CD8-positive, alpha-beta T cell (primary cell): ENCODE measurements at regions of chr13 and their contacts with region 1.

Region 1: DNA sequence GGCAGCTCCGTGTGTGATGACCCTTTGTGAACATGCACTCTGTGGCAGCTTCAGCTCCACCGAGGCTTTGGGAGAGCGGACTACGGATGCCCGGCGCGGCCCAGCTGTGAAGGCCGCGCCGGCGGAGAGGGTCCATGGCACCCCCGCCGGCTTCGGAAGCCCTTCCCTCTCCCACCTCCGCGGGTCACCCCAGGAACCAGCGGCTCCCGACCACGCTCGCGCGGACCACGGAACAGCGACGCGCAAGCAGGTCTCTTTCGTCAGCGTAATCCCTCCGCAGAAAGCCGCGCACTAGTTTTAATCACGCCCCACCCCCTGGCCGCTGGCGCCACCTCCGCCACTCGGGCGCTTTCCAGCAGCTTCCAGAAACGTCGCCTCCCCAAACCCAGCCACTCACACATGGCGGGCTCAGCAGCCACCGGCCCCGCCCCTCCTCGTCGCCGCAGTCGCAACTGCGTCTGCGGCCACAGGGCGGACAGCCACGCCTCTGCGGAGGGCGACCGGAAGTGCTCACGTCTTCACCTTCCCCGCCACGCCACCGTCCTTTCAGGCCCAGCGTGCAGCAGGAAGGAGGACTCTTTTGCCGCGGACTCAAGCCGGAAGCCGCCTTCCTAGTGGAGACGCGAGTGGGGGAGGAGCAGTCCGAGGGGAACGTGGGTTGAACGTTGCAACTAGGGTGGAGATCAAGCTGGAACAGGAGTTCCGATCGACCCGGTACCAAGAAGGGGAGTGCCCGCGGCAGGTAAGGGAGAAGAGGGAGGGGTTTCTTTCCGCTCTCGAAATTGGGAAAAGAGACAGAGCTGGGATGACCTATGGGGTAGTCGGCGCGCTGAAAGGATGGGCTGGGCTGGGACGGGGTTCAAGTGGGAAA is at the start of gene USPL1:
- DNase-seq: peak; percentile 97 to 100 (median 99)
- ATAC-seq: peak; percentile 89
- H3K4me3 ChIP-seq: peak within 1 kb of the TSS; percentile 78 to 96
- H3K4me3 Mint-ChIP-seq: no peak within 1 kb of the TSS
- H3K27ac ChIP-seq: peak within 1 kb of the TSS; percentile 94 to 95
- H3K27ac Mint-ChIP-seq: no peak within 1 kb of the TSS
- H3K4me1 ChIP-seq: peaks cover 34% of the 10 kb centered on the region
- H3K4me1 Mint-ChIP-seq: peaks cover 39% of the 10 kb centered on the region
- H3K27me3 ChIP-seq: no peaks in the 10 kb centered on the region
- H3K27me3 Mint-ChIP-seq: no peaks in the 10 kb centered on the region
- CTCF ChIP-seq: no peak
- total RNA-seq, gene USPL1: 42.0 to 42.4 TPM

Region 2: DNA sequence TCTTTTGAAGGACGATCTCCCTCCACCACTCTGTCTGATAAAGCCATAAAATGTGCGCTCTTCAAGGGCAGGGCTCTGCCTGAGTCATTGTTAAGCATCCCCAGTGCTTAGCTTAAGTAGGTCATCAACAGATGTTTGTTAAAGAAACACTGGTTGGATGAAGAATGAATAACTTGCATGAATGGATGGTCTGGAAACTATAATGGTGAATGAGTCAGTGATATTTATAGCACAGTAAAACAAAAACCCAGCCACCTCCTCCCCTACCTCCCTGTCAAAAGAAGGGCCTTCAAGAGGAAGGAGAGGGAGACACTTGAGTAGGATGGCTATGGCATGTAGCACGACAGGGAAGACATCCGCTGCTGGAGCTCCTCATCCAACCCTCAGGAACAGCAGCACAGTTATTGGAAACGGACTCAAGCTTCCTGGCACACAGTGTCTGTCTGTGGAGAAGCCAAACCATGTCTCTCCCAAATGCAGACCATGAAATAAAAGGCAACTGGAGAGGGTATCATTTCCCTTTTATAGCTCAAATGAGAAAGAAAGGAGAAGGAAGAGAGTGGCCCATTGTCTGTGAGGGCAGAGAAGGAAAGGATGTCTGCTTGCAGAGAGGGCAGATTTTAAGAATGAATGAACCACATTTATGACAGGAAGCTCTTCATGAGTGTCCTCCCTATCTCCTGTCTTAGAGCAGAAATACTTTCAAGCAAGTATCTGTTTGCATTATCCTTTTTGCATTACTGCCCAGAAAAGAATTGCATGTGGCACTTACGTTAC is 583.7 kb before region 1 on chr13:
- CTCF ChIA-PET with region 1: no interaction called
- POLR2A ChIA-PET with region 1: no interaction called
- intact Hi-C with region 1: no loop called
- DNase-seq: no peak
- ATAC-seq: no peak
- H3K4me3 ChIP-seq: no peak overlapping the region
- H3K4me3 Mint-ChIP-seq: no peak overlapping the region
- H3K27ac ChIP-seq: no peak overlapping the region
- H3K27ac Mint-ChIP-seq: no peak overlapping the region
- H3K4me1 ChIP-seq: no peaks in the 10 kb centered on the region
- H3K4me1 Mint-ChIP-seq: no peaks in the 10 kb centered on the region
- H3K27me3 ChIP-seq: no peaks in the 10 kb centered on the region
- H3K27me3 Mint-ChIP-seq: peaks cover 6% of the 10 kb centered on the region
- CTCF ChIP-seq: no peak

Region 3: DNA sequence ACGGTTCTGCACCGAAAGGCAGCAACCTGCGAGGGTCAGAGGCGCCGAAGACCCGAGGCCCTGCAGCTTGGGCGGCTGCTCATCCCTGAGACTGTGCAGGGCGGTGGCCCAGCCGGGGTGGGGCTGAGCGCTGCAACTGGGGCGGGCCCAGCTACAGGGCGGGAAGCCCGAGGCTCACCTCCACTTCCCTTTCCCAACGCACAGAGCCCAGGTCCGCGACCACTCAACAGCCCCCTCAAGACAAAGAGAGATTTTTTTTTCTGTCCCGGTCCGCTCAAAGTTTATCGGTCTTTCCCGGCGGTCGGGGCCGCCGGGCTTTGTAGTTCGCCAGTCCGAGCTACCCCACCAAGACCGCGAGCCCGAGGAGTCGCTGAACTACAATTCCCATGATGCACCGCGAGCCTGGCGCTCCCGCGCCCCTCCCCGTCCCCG is 310.8 kb before region 1 on chr13:
- CTCF ChIA-PET with region 1: no interaction called
- POLR2A ChIA-PET with region 1: interaction called, 3 read pairs
- intact Hi-C with region 1: loop called (anchors 1 to 5 kb)
- DNase-seq: peak; percentile 80 to 94 (median 92)
- ATAC-seq: peak; percentile 86
- H3K4me3 ChIP-seq: peak overlapping the region; percentile 79 to 97
- H3K4me3 Mint-ChIP-seq: peak overlapping the region; percentile 89
- H3K27ac ChIP-seq: peak overlapping the region; percentile 56 to 60
- H3K27ac Mint-ChIP-seq: peak overlapping the region; percentile 79
- H3K4me1 ChIP-seq: peaks cover 5% of the 10 kb centered on the region
- H3K4me1 Mint-ChIP-seq: peaks cover 8% of the 10 kb centered on the region
- H3K27me3 ChIP-seq: no peaks in the 10 kb centered on the region
- H3K27me3 Mint-ChIP-seq: no peaks in the 10 kb centered on the region
- CTCF ChIP-seq: no peak

Region 4: GRCh38 chr13:30408319-30409101 is 209.0 kb before region 1 on chr13:
- CTCF ChIA-PET with region 1: no interaction called
- POLR2A ChIA-PET with region 1: no interaction called
- intact Hi-C with region 1: loop called in 1 of 2 experiments (anchors 1 kb)
- DNase-seq: peak; percentile 82 to 94 (median 90)
- ATAC-seq: peak; percentile 94
- H3K4me3 ChIP-seq: peak overlapping the region; percentile 31 to 39
- H3K4me3 Mint-ChIP-seq: peak overlapping the region; percentile 72
- H3K27ac ChIP-seq: peak overlapping the region in 1 of 2 experiments; percentile 67
- H3K27ac Mint-ChIP-seq: peak overlapping the region; percentile 86
- H3K4me1 ChIP-seq: peaks cover 14% of the 10 kb centered on the region
- H3K4me1 Mint-ChIP-seq: peaks cover 27% of the 10 kb centered on the region
- H3K27me3 ChIP-seq: no peaks in the 10 kb centered on the region
- H3K27me3 Mint-ChIP-seq: no peaks in the 10 kb centered on the region
- CTCF ChIP-seq: peak; percentile 74

Region 5: GRCh38 chr13:30561511-30561910 is 56.0 kb before region 1 on chr13:
- CTCF ChIA-PET with region 1: no interaction called
- POLR2A ChIA-PET with region 1: no interaction called
- intact Hi-C with region 1: no loop called
- DNase-seq: no peak
- ATAC-seq: no peak
- H3K4me3 ChIP-seq: no peak overlapping the region
- H3K4me3 Mint-ChIP-seq: no peak overlapping the region
- H3K27ac ChIP-seq: no peak overlapping the region
- H3K27ac Mint-ChIP-seq: no peak overlapping the region
- H3K4me1 ChIP-seq: no peaks in the 10 kb centered on the region
- H3K4me1 Mint-ChIP-seq: no peaks in the 10 kb centered on the region
- H3K27me3 ChIP-seq: no peaks in the 10 kb centered on the region
- H3K27me3 Mint-ChIP-seq: peaks cover 4% of the 10 kb centered on the region
- CTCF ChIP-seq: no peak

Region 6: DNA sequence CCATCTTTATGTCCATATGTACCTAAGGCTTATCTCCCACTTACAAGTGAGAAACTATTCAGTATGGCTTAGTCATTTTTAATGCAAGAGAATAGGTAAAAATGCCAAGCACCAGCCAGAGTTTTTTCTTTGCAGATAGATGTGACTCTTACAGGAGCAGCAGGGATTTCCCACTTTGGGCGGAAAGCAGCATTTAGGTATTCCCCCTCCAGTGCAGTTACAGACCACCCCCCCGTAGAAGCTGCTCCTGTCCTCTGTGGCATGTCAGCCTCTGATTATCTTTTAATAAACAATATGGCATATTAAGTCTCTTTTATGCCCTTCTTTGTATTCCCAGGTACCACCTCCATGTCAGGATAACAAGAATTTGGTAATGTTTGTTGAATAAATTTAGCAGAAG is 24.5 kb before region 1 on chr13:
- CTCF ChIA-PET with region 1: no interaction called
- POLR2A ChIA-PET with region 1: no interaction called
- intact Hi-C with region 1: no loop called
- DNase-seq: no peak
- ATAC-seq: no peak
- H3K4me3 ChIP-seq: no peak overlapping the region
- H3K4me3 Mint-ChIP-seq: no peak overlapping the region
- H3K27ac ChIP-seq: no peak overlapping the region
- H3K27ac Mint-ChIP-seq: no peak overlapping the region
- H3K4me1 ChIP-seq: no peaks in the 10 kb centered on the region
- H3K4me1 Mint-ChIP-seq: no peaks in the 10 kb centered on the region
- H3K27me3 ChIP-seq: no peaks in the 10 kb centered on the region
- H3K27me3 Mint-ChIP-seq: peaks cover 2% of the 10 kb centered on the region
- CTCF ChIP-seq: no peak

Region 7: GRCh38 chr13:30673669-30674521 is 56.3 kb after region 1 on chr13:
- CTCF ChIA-PET with region 1: no interaction called
- POLR2A ChIA-PET with region 1: interaction called, 4 read pairs
- intact Hi-C with region 1: loop called (anchors 1 to 2 kb)
- DNase-seq: peak; percentile 82 to 95 (median 87)
- ATAC-seq: peak; percentile 91
- H3K4me3 ChIP-seq: peak overlapping the region; percentile 63
- H3K4me3 Mint-ChIP-seq: peak overlapping the region; percentile 88
- H3K27ac ChIP-seq: peak overlapping the region; percentile 44 to 68
- H3K27ac Mint-ChIP-seq: peak overlapping the region; percentile 92
- H3K4me1 ChIP-seq: peaks cover 7% of the 10 kb centered on the region
- H3K4me1 Mint-ChIP-seq: peaks cover 25% of the 10 kb centered on the region
- H3K27me3 ChIP-seq: no peaks in the 10 kb centered on the region
- H3K27me3 Mint-ChIP-seq: no peaks in the 10 kb centered on the region
- CTCF ChIP-seq: no peak

Region 8: GRCh38 chr13:31161828-31162590 is 544.5 kb after region 1 on chr13 and contains the start of gene HSPH1:
- CTCF ChIA-PET with region 1: no interaction called
- POLR2A ChIA-PET with region 1: no interaction called
- intact Hi-C with region 1: loop called in 1 of 2 experiments (anchors 5 kb)
- DNase-seq: peak; percentile 96 to 99 (median 98)
- ATAC-seq: peak; percentile 83
- H3K4me3 ChIP-seq: peak within 1 kb of the TSS; percentile 76 to 95
- H3K4me3 Mint-ChIP-seq: peak within 1 kb of the TSS; percentile 95
- H3K27ac ChIP-seq: peak within 1 kb of the TSS; percentile 98
- H3K27ac Mint-ChIP-seq: peak within 1 kb of the TSS; percentile 98
- H3K4me1 ChIP-seq: peaks cover 25% of the 10 kb centered on the region
- H3K4me1 Mint-ChIP-seq: peaks cover 43% of the 10 kb centered on the region
- H3K27me3 ChIP-seq: no peaks in the 10 kb centered on the region
- H3K27me3 Mint-ChIP-seq: no peaks in the 10 kb centered on the region
- CTCF ChIP-seq: no peak
- total RNA-seq, gene HSPH1: 189 to 199 TPM